ENCODE measurements at regions of chr5 and their contacts with region 1.

Region 1: DNA sequence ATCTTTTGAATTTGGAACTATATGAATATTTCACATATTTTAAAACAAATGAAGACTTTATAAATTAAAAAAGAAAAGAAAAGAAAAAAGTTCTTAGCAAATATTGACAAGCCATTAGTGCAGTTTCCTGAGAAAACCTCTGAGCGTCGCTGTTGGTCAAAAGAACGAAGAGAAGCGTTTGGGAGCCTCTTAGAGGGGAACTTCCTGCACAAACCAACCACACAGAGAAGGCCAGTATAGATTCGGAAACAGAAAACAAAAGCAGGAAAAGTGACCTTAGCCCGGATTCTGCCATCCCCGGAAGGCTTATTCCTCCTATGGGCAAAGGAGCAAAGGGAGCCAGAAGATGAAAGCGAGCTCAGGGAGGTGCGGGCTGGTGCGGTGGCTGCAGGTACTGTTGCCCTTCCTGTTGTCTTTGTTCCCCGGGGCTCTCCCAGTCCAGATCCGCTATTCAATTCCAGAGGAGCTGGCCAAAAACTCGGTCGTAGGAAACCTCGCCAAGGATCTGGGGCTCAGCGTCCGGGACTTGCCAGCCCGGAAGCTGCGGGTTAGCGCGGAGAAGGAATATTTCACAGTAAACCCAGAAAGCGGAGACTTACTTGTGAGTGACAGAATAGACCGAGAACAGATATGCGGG is at the start of gene PCDHGB2:
- DNase-seq: peak in 1 of 2 experiments; percentile 15
- H3K4me3 ChIP-seq: no peak within 1 kb of the TSS
- H3K4me3 Mint-ChIP-seq: peak within 1 kb of the TSS; percentile 36
- H3K27ac Mint-ChIP-seq: peak within 1 kb of the TSS; percentile 31
- H3K4me1 ChIP-seq: no peaks in the 10 kb centered on the region
- H3K4me1 Mint-ChIP-seq: no peaks in the 10 kb centered on the region
- H3K27me3 ChIP-seq: no peaks in the 10 kb centered on the region
- H3K27me3 Mint-ChIP-seq: no peaks in the 10 kb centered on the region
- CTCF ChIP-seq: peak; percentile 40 to 47
- total RNA-seq, gene PCDHGB2: 1.00 and 1.3 TPM in 2 replicates

Region 2: GRCh38 chr5:141135030-141135717 is 224.7 kb before region 1 on chr5 and contains the start of gene PCDHB5:
- CTCF ChIA-PET with region 1: no interaction called
- POLR2A ChIA-PET with region 1: no interaction called
- intact Hi-C with region 1: no loop called
- DNase-seq: no peak
- H3K4me3 ChIP-seq: no peak within 1 kb of the TSS
- H3K4me3 Mint-ChIP-seq: no peak within 1 kb of the TSS
- H3K27ac Mint-ChIP-seq: no peak within 1 kb of the TSS
- H3K4me1 ChIP-seq: no peaks in the 10 kb centered on the region
- H3K4me1 Mint-ChIP-seq: no peaks in the 10 kb centered on the region
- H3K27me3 ChIP-seq: no peaks in the 10 kb centered on the region
- H3K27me3 Mint-ChIP-seq: no peaks in the 10 kb centered on the region
- CTCF ChIP-seq: no peak
- total RNA-seq, gene PCDHB5: not detected in 2 replicates

Region 3: GRCh38 chr5:141326088-141326854 is 33.6 kb before region 1 on chr5:
- CTCF ChIA-PET with region 1: no interaction called
- POLR2A ChIA-PET with region 1: no interaction called
- intact Hi-C with region 1: loop called (anchors 2 kb)
- DNase-seq: peak; percentile 82 to 85
- H3K4me3 ChIP-seq: peak overlapping the region; percentile 39
- H3K4me3 Mint-ChIP-seq: peak overlapping the region; percentile 93
- H3K27ac Mint-ChIP-seq: peak overlapping the region; percentile 88
- H3K4me1 ChIP-seq: no peaks in the 10 kb centered on the region
- H3K4me1 Mint-ChIP-seq: no peaks in the 10 kb centered on the region
- H3K27me3 ChIP-seq: no peaks in the 10 kb centered on the region
- H3K27me3 Mint-ChIP-seq: no peaks in the 10 kb centered on the region
- CTCF ChIP-seq: peak; percentile 80 to 85

Region 4: GRCh38 chr5:141465351-141465750 is 105.4 kb after region 1 on chr5:
- CTCF ChIA-PET with region 1: no interaction called
- POLR2A ChIA-PET with region 1: no interaction called
- intact Hi-C with region 1: no loop called
- DNase-seq: no peak
- H3K4me3 ChIP-seq: no peak overlapping the region
- H3K4me3 Mint-ChIP-seq: no peak overlapping the region
- H3K27ac Mint-ChIP-seq: no peak overlapping the region
- H3K4me1 ChIP-seq: no peaks in the 10 kb centered on the region
- H3K4me1 Mint-ChIP-seq: no peaks in the 10 kb centered on the region
- H3K27me3 ChIP-seq: no peaks in the 10 kb centered on the region
- H3K27me3 Mint-ChIP-seq: no peaks in the 10 kb centered on the region
- CTCF ChIP-seq: no peak